Activated CD8-positive, alpha-beta T cell treated with anti-CD3 and anti-CD28 coated beads for 36 hours (primary cell): ENCODE measurements at regions of chr9 and their contacts with region 1.

Region 1: GRCh38 chr9:107489687-107490605 is at the start of gene KLF4:
- DNase-seq: peak; percentile 82
- ATAC-seq: peak; percentile 86
- H3K4me3 Mint-ChIP-seq: peak within 1 kb of the TSS; percentile 59
- H3K27ac Mint-ChIP-seq: no peak within 1 kb of the TSS
- H3K4me1 Mint-ChIP-seq: peaks cover 8% of the 10 kb centered on the region
- H3K27me3 Mint-ChIP-seq: peaks cover 63% of the 10 kb centered on the region
- CTCF ChIP-seq: no peak
- total RNA-seq, gene KLF4: 1.6 to 1.7 TPM

Region 2: GRCh38 chr9:107438211-107439090 is 51.5 kb before region 1 on chr9:
- CTCF ChIA-PET with region 1: no interaction called
- POLR2A ChIA-PET with region 1: no interaction called
- intact Hi-C with region 1: loop called (anchors 10 kb)
- DNase-seq: no peak
- ATAC-seq: no peak
- H3K4me3 Mint-ChIP-seq: no peak overlapping the region
- H3K27ac Mint-ChIP-seq: no peak overlapping the region
- H3K4me1 Mint-ChIP-seq: no peaks in the 10 kb centered on the region
- H3K27me3 Mint-ChIP-seq: peaks cover 2% of the 10 kb centered on the region
- CTCF ChIP-seq: no peak

Region 3: DNA sequence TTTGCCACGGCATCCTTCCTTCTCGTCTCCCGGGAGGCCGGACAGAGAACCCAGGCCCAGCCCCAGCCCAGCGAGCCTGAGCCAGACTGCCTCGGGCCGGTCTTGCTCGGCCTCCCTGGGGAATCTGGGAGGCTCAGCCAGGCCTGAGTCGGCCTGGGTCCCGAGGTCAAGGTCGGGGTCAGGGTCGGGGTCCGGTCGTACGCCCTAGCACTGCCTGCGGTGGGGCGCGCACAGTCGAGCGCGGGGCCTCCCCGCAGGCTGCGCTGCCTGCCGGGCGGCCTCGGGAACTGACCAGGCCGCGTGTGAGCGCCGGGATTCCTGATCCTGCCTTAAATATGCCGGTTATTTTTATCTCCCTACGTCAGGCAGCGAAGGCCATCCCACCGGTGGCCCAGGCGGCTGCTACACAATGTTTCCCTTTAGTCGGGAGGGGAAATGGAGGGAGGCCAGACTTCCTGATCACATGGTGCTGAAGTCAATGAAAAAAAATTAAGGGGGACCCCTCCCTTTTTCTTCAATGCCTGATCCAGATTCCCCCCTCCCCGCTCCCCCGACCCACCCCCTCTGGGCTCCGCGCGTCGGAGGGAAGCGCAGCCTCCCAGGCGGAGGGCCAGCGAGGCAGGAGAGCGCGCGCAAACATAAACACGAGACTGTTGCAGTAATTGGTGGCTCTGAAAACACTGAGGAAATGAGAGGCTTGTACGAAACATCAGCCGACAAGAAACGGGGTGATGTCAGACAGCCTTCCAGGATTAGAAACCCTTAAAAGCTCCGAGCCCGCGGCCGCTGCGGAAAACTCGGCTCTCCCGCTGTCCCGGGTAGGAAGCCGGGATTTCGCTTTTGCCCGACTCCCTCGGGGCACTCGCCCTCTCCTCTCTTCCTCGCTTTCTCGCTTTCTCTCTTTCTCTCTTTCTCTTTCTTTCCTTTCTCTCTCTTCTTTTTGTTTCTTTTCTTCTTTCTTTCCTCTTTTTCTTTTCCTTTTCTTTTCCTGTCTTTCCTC is 147.8 kb after region 1 on chr9:
- CTCF ChIA-PET with region 1: no interaction called
- POLR2A ChIA-PET with region 1: no interaction called
- intact Hi-C with region 1: no loop called
- DNase-seq: no peak
- ATAC-seq: no peak
- H3K4me3 Mint-ChIP-seq: peak overlapping the region; percentile 19
- H3K27ac Mint-ChIP-seq: no peak overlapping the region
- H3K4me1 Mint-ChIP-seq: peaks cover 3% of the 10 kb centered on the region
- H3K27me3 Mint-ChIP-seq: peaks cover 46% of the 10 kb centered on the region
- CTCF ChIP-seq: no peak

Region 4: DNA sequence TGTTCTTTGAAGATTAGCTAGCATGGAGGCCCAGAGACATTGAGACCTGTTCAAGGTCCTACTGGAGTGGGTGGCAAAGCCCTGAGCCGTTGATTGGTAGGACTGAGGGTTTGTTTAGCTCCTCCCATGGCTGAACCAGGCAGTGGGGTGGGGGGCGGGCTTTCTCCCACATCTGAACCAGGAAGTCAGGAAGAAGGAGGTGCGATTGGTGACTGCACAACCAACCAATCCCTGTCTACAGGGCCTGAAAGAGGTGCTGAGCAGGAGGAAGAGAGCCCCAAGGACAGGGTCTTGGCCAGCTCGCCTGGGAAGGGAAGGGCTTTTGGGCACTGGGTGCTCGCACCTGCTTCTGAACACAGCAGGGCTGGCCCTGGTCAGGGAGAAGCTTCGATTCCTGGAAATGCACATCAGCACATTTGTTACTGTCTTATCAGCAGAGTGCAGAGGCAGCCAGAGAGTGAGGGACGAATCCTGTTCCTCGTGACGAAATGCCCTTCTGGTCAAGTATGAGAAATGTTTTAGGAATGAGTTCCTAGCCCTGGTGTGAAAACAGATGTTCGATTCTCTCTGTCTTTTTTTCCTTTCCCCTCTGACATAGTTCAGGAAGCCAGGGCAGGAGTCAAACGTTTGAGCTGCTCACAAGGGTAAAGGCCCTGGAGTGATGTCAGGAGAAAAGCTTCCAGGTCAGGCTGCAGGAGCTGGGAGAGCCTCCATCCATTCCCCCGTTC is 294.4 kb after region 1 on chr9:
- CTCF ChIA-PET with region 1: no interaction called
- POLR2A ChIA-PET with region 1: no interaction called
- intact Hi-C with region 1: no loop called
- DNase-seq: no peak
- ATAC-seq: no peak
- H3K4me3 Mint-ChIP-seq: no peak overlapping the region
- H3K27ac Mint-ChIP-seq: no peak overlapping the region
- H3K4me1 Mint-ChIP-seq: no peaks in the 10 kb centered on the region
- H3K27me3 Mint-ChIP-seq: no peaks in the 10 kb centered on the region
- CTCF ChIP-seq: no peak